Right ventricle myocardium superior (tissue), 1 donor: ENCODE measurements at regions of chr22 and their contacts with region 1.

Region 1: GRCh38 chr22:23539135-23539838 is 40.8 kb downstream of the IGLL1 start:
- DNase-seq: peak; percentile 87
- ATAC-seq: peak; percentile 98

Region 2: GRCh38 chr22:23315341-23315917 is 223.9 kb before region 1 on chr22:
- intact Hi-C with region 1: loop called (anchors 2 kb)
- DNase-seq: peak; percentile 79
- ATAC-seq: no peak

Region 3: GRCh38 chr22:23402275-23403151 is 136.8 kb before region 1 on chr22:
- intact Hi-C with region 1: loop called (anchors 10 kb)
- DNase-seq: no peak
- ATAC-seq: peak; percentile 62

Region 4: DNA sequence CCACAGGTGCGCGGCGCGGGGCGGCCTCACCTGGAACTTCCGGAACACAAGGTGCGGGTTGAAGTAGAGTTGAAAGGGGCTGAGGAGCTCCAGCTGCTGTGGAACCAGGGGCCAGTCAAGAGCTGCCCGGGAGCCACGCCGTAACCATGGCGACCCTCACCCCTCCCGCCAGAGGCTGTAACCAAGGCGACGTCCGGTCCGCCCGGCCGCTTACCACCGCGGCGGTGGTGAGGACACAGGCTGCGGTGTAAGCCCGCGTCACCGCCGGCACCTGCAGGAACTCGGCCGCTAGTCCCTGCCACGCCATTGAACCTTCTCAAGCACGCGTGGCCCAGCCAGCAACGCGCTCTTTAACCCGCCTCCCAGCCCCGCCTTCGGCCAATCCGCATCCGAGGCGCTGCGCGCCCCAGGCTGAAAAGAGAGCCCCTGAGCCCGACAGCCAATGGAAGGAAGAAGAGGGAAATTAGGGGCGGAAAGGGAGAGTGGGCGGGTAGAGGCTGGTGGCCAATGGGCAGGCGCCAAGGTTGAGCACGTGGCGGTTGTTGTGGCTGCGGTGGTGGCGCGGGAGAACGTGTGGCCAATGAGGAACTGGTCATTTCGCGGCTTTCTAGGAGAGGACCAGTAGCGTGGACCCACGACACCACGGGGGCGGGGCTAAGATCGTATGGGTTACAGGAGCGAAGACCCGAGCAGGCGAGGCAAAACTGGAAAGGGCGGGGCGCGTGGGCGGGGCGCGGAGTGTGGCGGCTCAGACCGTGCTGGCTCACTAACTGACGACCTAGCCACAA is 299.6 kb after region 1 on chr22 and contains the start of gene DERL3:
- intact Hi-C with region 1: no loop called
- DNase-seq: peak; percentile 99
- ATAC-seq: peak; percentile 60
- total RNA-seq, gene DERL3: 2.8 TPM

Region 5: GRCh38 chr22:23849009-23850006 is 310.0 kb after region 1 on chr22:
- intact Hi-C with region 1: loop called (anchors 5 kb)
- DNase-seq: peak; percentile 90
- ATAC-seq: peak; percentile 71